Left colon (tissue), 2 donors: ENCODE measurements at regions of chr5 and their contacts with region 1.

Region 1: GRCh38 chr5:97009212-97009898 is 73.5 kb downstream of the LNPEP start:
- DNase-seq: no peak
- ATAC-seq: peak; percentile 46

Region 2: DNA sequence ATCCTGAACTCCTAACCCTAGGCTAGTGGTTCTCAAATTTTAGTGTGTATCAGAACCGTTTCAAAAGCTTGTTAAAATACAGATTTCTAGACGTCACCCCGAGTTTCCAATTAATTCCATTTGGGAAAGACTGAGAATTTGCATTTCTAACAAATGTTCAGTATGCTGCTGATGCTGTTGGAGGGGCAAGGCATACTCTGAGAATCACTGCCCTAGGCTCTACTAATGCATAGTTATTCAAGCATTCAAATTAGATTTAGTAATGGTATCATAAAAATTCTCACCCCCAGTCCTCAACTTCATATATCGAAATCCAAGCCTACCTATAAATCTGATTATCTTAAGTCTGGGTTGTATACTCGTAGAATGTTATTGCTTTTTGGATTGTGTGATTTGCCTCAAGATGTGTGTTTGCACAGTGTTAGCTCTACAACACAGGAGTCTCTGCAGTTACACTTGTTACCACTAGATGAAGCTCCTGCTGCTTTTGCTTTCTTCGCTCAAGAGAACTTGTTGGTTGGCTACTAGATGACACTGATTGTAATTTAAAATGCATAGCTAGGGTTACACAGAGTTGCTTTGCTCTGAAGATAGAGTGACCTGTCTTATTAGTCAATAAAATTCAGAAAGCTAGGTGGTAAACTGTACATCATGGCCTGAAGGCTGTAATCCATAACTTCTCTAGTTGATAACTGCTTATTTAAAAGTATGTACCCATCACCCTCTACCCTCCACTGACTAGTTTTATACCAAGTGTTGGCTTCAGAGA is 140.6 kb before region 1 on chr5:
- intact Hi-C with region 1: loop called in 1 of 2 experiments (anchors 10 kb)
- DNase-seq: no peak
- ATAC-seq: peak; percentile 94

Region 3: GRCh38 chr5:97111616-97112015 is 102.3 kb after region 1 on chr5:
- intact Hi-C with region 1: no loop called
- DNase-seq: peak; percentile 51 to 70
- ATAC-seq: peak; percentile 94